ENCODE measurements at regions of chrX and their contacts with region 1.

Region 1: DNA sequence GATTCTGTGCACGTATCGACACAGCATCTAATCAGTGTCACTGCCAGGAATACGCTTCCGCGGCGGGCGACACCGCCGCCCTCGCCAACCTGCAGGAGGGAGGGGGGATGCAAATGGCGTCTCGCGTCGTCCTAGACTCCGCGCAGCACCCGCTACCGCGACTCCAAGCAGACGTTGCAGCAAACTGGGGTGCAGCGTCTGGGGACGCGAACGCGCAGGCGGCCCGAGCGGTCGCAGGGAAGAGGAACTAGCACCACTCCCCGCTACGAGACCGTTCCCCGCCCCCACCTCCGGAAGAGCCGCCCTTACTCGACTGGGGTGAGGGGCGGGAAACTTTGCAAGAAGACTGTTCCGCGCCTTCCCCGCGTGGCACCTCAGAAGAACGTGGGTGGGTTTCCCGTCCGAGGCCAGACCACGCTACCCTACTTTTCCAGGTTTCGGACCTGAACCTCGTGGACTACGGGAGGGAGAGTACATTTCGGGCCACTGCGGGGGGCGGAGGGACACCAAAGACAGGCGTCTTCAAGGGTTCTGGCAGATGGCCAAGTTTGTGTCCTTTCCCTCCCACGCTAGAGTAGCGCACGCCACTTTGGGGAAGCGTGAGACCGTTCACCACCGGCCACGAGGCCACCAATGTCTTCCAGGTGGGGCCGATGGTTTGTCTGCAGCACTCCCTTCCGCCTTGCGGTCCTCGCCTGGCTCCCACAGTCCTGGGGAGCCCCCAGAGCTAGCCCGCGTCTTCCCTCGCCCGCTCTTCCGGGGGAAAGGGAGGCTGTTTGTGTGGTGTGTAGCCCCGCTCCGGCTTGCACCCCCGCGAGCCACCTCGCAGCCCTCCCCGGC is 78.0 kb upstream of the BCOR start:
- DNase-seq: peak; percentile 92
- H3K4me3 Mint-ChIP-seq: peak overlapping the region; percentile 93
- H3K27ac Mint-ChIP-seq: peak overlapping the region; percentile 99
- H3K4me1 Mint-ChIP-seq: peaks cover 25% of the 10 kb centered on the region
- H3K27me3 Mint-ChIP-seq: no peaks in the 10 kb centered on the region

Region 2: DNA sequence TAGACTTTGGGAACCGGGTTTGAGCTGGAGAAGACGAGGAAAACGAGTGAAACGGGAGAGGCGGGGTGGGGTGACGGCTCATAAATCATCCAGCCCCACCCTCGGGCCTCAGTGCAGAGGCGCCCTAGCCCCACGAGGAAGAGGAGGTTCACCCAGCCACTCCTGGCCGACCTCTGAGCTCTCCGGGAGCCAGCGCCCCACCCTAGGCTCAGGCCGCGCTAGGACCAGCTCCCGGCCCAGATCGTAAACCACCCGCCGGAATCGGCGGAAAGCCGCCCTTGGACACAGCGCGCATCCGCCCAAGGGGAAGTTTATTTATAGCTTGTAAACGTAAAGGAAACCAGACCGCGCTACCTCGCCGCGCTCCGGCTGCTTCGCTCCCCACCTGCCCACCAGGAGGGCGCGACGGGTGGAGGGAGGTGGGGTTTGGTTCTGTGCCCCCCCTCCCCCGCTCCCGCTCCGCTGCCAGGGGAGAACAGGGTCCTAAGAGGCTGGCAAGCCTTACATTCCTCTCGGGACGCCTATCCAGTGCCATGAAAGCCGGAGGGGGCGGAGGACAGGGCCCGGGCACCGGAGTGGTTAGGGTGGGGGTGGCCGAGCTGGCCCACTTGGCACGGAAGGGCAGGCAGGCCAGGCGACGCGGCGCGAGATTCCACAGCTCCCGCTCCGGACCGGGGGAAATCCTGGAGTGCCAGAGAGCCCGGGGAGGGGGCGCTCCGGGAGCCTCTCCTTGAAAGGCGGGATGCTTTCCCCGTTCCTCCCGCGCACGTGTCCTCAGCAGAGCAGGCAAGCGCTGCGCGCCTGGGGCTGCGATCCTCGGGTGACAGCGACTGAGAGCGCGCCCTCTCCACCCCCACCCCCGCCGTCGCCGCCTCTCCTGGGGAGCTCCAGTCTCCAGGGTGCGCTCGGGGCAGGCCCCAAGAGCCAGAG is 162.2 kb before region 1 on chrX:
- intact Hi-C with region 1: loop called (anchors 2 kb)
- DNase-seq: peak; percentile 86
- H3K4me3 Mint-ChIP-seq: peak overlapping the region; percentile 80
- H3K27ac Mint-ChIP-seq: peak overlapping the region; percentile 88
- H3K4me1 Mint-ChIP-seq: peaks cover 18% of the 10 kb centered on the region
- H3K27me3 Mint-ChIP-seq: peaks cover 11% of the 10 kb centered on the region

Region 3: GRCh38 chrX:40108959-40109287 is 66.8 kb before region 1 on chrX:
- intact Hi-C with region 1: loop called (anchors 2 kb)
- DNase-seq: peak; percentile 84
- H3K4me3 Mint-ChIP-seq: peak overlapping the region; percentile 61
- H3K27ac Mint-ChIP-seq: no peak overlapping the region
- H3K4me1 Mint-ChIP-seq: peaks cover 9% of the 10 kb centered on the region
- H3K27me3 Mint-ChIP-seq: peaks cover 4% of the 10 kb centered on the region

Region 4: GRCh38 chrX:40153335-40154249 is 22.1 kb before region 1 on chrX:
- intact Hi-C with region 1: loop called (anchors 2 kb)
- DNase-seq: peak; percentile 87
- H3K4me3 Mint-ChIP-seq: peak overlapping the region; percentile 83
- H3K27ac Mint-ChIP-seq: peak overlapping the region; percentile 80
- H3K4me1 Mint-ChIP-seq: peaks cover 12% of the 10 kb centered on the region
- H3K27me3 Mint-ChIP-seq: peaks cover 2% of the 10 kb centered on the region

Region 5: DNA sequence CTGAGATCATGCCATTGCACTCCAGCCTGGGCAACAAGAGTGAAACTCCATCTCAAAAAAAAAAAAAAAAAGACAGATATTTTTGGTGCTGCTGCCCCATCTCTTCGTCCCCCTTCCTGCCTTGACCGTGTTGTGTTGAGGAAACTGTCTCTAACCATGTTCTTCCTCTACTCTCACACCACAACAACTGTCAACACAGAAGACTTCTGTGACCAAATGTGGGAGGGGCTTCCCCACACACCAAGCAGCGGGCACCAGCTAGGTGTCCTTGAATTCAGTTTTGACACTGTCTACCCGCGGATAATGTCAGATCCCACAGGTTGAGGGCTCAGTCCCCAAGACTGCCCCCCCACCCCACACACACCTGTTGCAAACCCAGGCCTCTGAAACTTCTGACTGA is 26.7 kb after region 1 on chrX:
- intact Hi-C with region 1: loop called (anchors 2 kb)
- DNase-seq: peak; percentile 78
- H3K4me3 Mint-ChIP-seq: peak overlapping the region; percentile 15
- H3K27ac Mint-ChIP-seq: peak overlapping the region; percentile 28
- H3K4me1 Mint-ChIP-seq: peaks cover 15% of the 10 kb centered on the region
- H3K27me3 Mint-ChIP-seq: no peaks in the 10 kb centered on the region

Region 6: GRCh38 chrX:40298572-40299479 is 123.1 kb after region 1 on chrX:
- intact Hi-C with region 1: no loop called
- DNase-seq: no peak
- H3K4me3 Mint-ChIP-seq: no peak overlapping the region
- H3K27ac Mint-ChIP-seq: no peak overlapping the region
- H3K4me1 Mint-ChIP-seq: peaks cover 14% of the 10 kb centered on the region
- H3K27me3 Mint-ChIP-seq: peaks cover 2% of the 10 kb centered on the region

Measured in activated CD4-positive, alpha-beta T cell treated with anti-CD3 and anti-CD28 coated beads, Interleukin-2, amount 10 ng/mL, durations not matched to agents 24 days and 14 days (primary cell).